ENCODE measurements at regions of chr10 and their contacts with region 1.

Region 1: GRCh38 chr10:9869205-9869604 is 1148.5 kb upstream of the CELF2 start:
- DNase-seq: no peak
- H3K4me3 ChIP-seq: no peak overlapping the region
- H3K27ac ChIP-seq: no peak overlapping the region
- H3K4me1 ChIP-seq: no peaks in the 10 kb centered on the region
- CTCF ChIP-seq: no peak

Region 2: DNA sequence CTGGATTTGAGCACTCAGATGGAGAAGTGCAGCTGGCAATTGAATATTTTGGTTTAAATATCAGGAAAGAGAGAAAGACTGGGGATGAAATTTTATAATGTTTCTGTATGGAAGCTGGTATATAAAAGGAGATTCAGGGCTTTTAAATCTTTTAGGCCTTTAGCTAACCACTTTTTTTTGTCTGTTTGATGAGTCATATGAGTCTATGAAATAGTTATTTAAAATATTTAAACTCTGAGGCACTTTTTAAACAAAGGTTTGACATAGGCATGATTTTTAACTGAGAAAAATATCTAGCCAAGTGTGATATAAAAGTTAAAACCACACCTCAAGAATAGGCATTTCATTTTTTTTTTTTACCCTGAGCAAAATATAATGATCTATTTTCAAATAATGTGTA is 870.5 kb before region 1 on chr10:
- CTCF ChIA-PET with region 1: no interaction called
- POLR2A ChIA-PET with region 1: no interaction called
- intact Hi-C with region 1: no loop called
- DNase-seq: no peak
- H3K4me3 ChIP-seq: no peak overlapping the region
- H3K27ac ChIP-seq: no peak overlapping the region
- H3K4me1 ChIP-seq: no peaks in the 10 kb centered on the region
- CTCF ChIP-seq: no peak

Region 3: DNA sequence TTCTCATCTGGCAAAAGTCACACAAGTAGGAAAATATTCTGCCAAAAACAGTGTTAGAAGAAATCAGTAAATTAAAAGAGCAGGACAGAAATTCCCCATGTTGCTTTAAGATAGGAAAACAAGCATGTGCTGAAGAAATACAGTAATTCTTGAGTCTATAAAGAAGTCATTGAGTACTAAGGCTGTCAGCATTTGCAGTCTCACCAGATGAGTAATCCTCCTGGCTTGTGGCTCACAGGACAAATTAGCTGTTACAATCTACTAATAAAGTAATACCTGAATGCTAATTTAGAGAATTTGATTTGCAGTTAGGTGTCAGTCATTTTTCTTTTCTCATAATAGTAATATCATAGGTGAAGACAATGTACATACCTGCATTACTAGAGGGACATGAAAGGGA is 10.4 kb before region 1 on chr10:
- CTCF ChIA-PET with region 1: no interaction called
- POLR2A ChIA-PET with region 1: interaction called, 11 read pairs
- intact Hi-C with region 1: no loop called
- DNase-seq: no peak
- H3K4me3 ChIP-seq: no peak overlapping the region
- H3K27ac ChIP-seq: no peak overlapping the region
- H3K4me1 ChIP-seq: no peaks in the 10 kb centered on the region
- CTCF ChIP-seq: no peak

Measured in OCI-LY7 (cell line).